ENCODE measurements at regions of chr6 and their contacts with region 1.

Region 1: DNA sequence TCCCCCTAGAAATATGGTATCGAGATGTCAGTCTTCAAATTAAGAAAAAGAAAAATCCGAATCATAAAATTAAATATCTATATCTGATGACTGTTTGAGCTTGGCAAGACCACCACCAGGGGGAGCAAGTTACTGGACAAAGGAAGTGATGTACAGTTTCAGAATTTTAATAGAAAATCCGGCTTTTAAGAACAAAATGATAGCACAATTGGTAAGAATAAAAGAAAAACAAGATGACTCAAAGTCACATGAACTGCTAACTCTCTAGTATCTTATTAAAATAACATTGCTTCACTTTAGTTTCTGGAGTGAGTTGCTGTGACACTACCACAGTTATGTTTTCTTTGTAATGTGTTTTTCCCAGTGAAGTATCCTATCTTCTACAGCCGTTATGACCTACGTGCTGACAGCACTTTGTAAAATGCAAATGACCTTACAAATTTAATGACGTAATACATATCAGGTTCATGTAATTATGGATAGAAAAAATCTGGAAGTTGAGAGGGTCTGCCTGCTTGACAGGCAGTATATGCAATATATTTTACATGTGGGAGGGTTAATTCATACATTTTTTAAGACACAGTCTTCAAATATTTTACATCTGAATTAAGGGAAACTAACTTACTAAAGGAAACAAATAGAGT is 405.3 kb upstream of the HS3ST5 start:
- DNase-seq: no peak
- H3K4me3 ChIP-seq: no peak overlapping the region
- H3K27ac ChIP-seq: no peak overlapping the region
- H3K4me1 ChIP-seq: no peaks in the 10 kb centered on the region
- H3K27me3 ChIP-seq: no peaks in the 10 kb centered on the region
- CTCF ChIP-seq: peak; percentile 34 to 65 (median 64)
- EP300 ChIP-seq: no peak
- POLR2A ChIP-seq: no peak

Region 2: GRCh38 chr6:114796576-114796975 is 48.5 kb after region 1 on chr6:
- intact Hi-C with region 1: no loop called
- DNase-seq: no peak
- H3K4me3 ChIP-seq: no peak overlapping the region
- H3K27ac ChIP-seq: no peak overlapping the region
- H3K4me1 ChIP-seq: no peaks in the 10 kb centered on the region
- H3K27me3 ChIP-seq: no peaks in the 10 kb centered on the region
- CTCF ChIP-seq: no peak
- EP300 ChIP-seq: no peak
- POLR2A ChIP-seq: no peak

Region 3: GRCh38 chr6:115896538-115897129 is 1148.5 kb after region 1 on chr6:
- intact Hi-C with region 1: loop called (anchors 5 kb)
- DNase-seq: no peak
- H3K4me3 ChIP-seq: no peak overlapping the region
- H3K27ac ChIP-seq: no peak overlapping the region
- H3K4me1 ChIP-seq: no peaks in the 10 kb centered on the region
- H3K27me3 ChIP-seq: no peaks in the 10 kb centered on the region
- CTCF ChIP-seq: peak; percentile 42 to 74 (median 63)
- EP300 ChIP-seq: no peak
- POLR2A ChIP-seq: no peak